ENCODE measurements at regions of chr1 and their contacts with region 1.

Region 1: GRCh38 chr1:89274411-89274857 is 1.8 kb upstream of the GBP5 start:
- DNase-seq: peak; percentile 35
- H3K4me3 Mint-ChIP-seq: peak overlapping the region; percentile 91
- H3K27ac Mint-ChIP-seq: peak overlapping the region; percentile 98
- H3K4me1 Mint-ChIP-seq: peaks cover 57% of the 10 kb centered on the region
- H3K27me3 Mint-ChIP-seq: no peaks in the 10 kb centered on the region

Region 2: GRCh38 chr1:88800382-88801051 is 473.9 kb before region 1 on chr1:
- CTCF ChIA-PET with region 1: no interaction called
- intact Hi-C with region 1: loop called (anchors 5 kb)
- DNase-seq: peak; percentile 72
- H3K4me3 Mint-ChIP-seq: no peak overlapping the region
- H3K27ac Mint-ChIP-seq: peak overlapping the region; percentile 74
- H3K4me1 Mint-ChIP-seq: peaks cover 17% of the 10 kb centered on the region
- H3K27me3 Mint-ChIP-seq: no peaks in the 10 kb centered on the region

Region 3: DNA sequence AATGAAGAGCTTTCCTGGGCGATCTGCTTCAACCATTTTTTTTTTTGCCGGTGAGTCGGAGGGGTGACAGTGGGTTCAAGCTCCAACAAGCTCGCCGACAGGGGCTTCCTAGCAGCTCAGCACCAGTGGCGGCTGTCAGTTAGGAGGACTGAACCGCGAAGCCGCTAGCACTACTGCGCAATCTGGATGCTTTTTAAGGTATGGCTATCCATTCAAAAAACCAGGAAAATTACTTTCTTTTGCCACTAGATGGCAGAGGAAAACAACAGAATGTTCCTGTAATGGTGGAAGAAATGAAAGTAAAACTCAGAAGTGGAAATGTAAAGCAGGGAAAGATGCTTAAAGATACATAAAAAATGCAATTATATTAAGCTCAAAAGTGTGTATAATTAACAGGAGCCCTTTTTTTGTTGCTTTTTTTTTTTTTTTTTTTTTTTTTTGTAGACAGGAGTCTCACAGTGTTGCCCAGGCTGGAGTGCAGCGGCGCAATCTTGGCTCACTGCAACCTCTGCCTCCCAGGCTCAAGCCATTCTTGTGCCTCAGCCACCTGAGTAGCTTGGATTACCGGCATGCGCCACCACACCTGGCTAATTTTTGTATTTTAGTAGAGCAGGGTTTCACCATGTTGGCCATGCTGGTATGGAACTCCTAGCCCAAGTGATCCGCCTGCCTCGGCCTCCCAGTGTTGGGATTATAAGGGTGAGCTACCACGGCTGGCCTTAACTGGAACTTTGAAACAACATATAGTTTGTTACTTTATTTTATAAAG is 290.5 kb before region 1 on chr1:
- CTCF ChIA-PET with region 1: interaction called, 17 read pairs
- intact Hi-C with region 1: loop called (anchors 1 kb)
- DNase-seq: peak; percentile 42
- H3K4me3 Mint-ChIP-seq: peak overlapping the region; percentile 27
- H3K27ac Mint-ChIP-seq: peak overlapping the region; percentile 47
- H3K4me1 Mint-ChIP-seq: peaks cover 80% of the 10 kb centered on the region
- H3K27me3 Mint-ChIP-seq: no peaks in the 10 kb centered on the region

Region 4: GRCh38 chr1:89065079-89065868 is 209.2 kb before region 1 on chr1 and contains the start of gene GBP1:
- CTCF ChIA-PET with region 1: no interaction called
- intact Hi-C with region 1: loop called (anchors 1 kb)
- DNase-seq: no peak
- H3K4me3 Mint-ChIP-seq: peak within 1 kb of the TSS; percentile 75
- H3K27ac Mint-ChIP-seq: peak within 1 kb of the TSS; percentile 89
- H3K4me1 Mint-ChIP-seq: peaks cover 53% of the 10 kb centered on the region
- H3K27me3 Mint-ChIP-seq: no peaks in the 10 kb centered on the region
- total RNA-seq, gene GBP1: 48.2 to 52.8 TPM

Region 5: GRCh38 chr1:89149229-89149628 is 125.2 kb before region 1 on chr1:
- CTCF ChIA-PET with region 1: no interaction called
- intact Hi-C with region 1: no loop called
- DNase-seq: no peak
- H3K4me3 Mint-ChIP-seq: no peak overlapping the region
- H3K27ac Mint-ChIP-seq: no peak overlapping the region
- H3K4me1 Mint-ChIP-seq: peaks cover 14% of the 10 kb centered on the region
- H3K27me3 Mint-ChIP-seq: peaks cover 2% of the 10 kb centered on the region

Region 6: GRCh38 chr1:89198491-89199072 is 75.9 kb before region 1 on chr1 and contains the start of gene GBP4:
- CTCF ChIA-PET with region 1: interaction called, 10 read pairs
- intact Hi-C with region 1: loop called (anchors 1 kb)
- DNase-seq: peak; percentile 65
- H3K4me3 Mint-ChIP-seq: peak within 1 kb of the TSS; percentile 92
- H3K27ac Mint-ChIP-seq: peak within 1 kb of the TSS; percentile 98
- H3K4me1 Mint-ChIP-seq: peaks cover 84% of the 10 kb centered on the region
- H3K27me3 Mint-ChIP-seq: no peaks in the 10 kb centered on the region
- total RNA-seq, gene GBP4: 22.9 to 23.2 TPM

Region 7: GRCh38 chr1:89310505-89310904 is 36.1 kb after region 1 on chr1:
- CTCF ChIA-PET with region 1: interaction called, 3 read pairs
- intact Hi-C with region 1: loop called (anchors 1 kb)
- DNase-seq: no peak
- H3K4me3 Mint-ChIP-seq: no peak overlapping the region
- H3K27ac Mint-ChIP-seq: peak overlapping the region; percentile 86
- H3K4me1 Mint-ChIP-seq: peaks cover 49% of the 10 kb centered on the region
- H3K27me3 Mint-ChIP-seq: no peaks in the 10 kb centered on the region

Region 8: DNA sequence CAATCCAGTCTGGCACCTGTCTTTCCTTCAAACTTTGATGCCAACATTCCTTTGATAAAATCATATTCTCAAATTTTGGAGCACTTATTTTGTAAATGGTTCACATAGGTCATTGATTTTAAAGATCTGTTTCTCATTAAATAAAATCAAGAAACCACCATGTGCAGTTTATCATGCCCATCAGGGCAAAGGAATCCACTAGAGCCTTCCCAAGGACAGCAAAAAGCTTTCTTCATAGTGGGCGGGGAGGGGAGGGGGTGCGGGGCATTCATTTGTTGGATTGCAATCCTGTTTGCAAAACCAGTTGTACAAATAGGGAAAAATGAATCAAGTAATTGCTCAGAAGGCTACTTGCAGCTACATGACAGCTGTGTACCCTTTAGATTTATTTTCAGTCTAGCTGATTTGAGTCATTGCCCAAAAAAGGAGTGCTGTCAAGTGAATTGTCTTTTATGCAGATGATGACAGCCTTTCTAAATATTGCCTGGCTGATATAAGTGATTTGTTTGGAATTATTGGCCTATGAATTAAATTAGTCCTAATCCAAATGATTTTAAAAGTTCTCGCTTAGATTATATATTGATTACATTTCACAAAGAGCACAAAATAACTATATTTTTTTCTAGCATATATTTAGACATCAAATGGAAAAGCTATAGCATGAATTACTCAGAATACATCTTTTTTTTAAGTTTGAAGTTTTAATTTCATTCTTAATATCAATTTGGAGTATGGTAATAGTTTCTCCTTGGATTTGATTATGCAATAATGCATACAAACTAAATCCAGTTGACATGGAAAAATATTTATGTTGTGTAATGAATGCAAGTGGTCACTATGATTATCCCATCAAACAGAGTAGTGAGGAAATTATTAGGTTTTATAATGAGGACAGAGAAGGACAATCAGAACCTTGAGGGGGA is 273.4 kb after region 1 on chr1:
- CTCF ChIA-PET with region 1: no interaction called
- intact Hi-C with region 1: loop called (anchors 5 kb)
- DNase-seq: peak; percentile 56
- H3K4me3 Mint-ChIP-seq: no peak overlapping the region
- H3K27ac Mint-ChIP-seq: peak overlapping the region; percentile 95
- H3K4me1 Mint-ChIP-seq: peaks cover 84% of the 10 kb centered on the region
- H3K27me3 Mint-ChIP-seq: no peaks in the 10 kb centered on the region

Measured in activated naive CD4-positive, alpha-beta T cell treated with anti-CD3 and anti-CD28 coated beads for 36 hours (primary cell).